ENCODE measurements at regions of chr1 and their contacts with region 1.

Region 1: DNA sequence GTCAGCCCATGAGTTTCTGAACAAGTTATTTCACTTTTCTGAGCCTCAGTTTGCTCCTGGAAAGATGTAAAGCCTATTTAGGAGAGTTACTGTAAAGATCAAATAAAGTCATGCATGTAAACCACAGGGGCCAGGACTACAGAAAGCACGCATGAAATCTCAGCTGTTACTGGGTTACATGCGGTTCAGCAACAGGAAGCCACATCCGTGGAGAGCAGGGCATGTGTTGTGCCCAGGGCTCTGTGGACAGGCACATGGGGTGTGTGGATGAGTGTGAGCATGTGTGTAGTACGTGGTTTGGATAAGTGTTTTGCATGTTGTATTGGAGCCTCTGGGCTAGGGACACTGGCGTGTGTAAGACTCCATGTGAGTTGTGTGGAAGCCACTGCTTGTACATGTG is 2.2 kb upstream of the EPHA2 start:
- DNase-seq: no peak
- H3K4me3 ChIP-seq: no peak overlapping the region
- H3K27ac ChIP-seq: no peak overlapping the region
- H3K4me1 ChIP-seq: peaks cover 0 to 35% (median 23%) of the 10 kb centered on the region in 4 donors
- H3K27me3 ChIP-seq: no peaks in the 10 kb centered on the region
- CTCF ChIP-seq: no peak

Region 2: DNA sequence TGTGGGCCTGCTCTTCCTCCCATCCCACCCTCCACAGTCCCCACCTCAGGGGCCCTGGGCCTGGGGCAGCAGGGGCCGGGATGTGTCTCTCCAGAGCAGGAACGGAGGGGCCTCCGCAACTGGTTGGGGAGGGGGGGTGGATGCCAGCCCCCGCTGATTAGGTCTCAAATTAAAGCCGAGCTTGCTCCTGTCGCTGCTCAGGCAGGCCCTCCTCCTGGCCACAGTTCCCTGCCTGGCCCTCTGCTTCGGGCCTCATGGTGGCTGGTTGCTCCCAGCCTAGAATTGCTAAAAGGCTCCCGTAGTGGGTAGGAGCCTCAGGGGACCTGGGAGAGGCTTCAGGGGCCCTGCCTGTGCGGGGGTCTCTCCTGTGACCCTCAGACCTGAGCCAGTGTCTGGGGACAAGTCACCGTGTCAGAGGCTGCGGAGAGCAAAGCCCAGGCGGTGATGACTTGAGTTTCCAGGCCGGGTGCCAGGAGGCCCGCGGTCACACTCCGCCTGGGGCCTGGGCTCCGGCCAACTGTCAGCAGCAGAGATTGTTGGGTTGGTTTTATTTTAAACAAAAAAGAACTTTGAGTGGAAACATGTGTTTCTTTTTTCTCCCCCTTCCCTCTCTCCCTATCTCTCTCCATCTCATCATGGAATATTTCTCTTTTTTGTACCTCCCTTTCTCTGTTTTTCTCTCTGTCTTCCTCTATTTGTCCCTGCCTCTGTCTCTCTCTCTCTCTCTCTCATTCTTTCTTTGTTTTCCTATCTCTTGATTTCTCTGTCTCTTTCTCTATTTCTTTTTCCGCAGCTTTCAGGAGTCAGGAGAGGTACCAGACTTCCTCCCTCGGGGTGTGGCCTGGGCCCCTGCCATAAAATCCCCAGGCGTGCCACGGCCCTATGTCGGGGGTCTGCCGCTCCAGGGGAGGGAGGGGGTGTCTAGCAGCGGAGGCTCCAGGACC is 17.9 kb after region 1 on chr1:
- intact Hi-C with region 1: loop called (anchors 2 kb)
- DNase-seq: peak; percentile 87 to 96
- H3K4me3 ChIP-seq: no peak overlapping the region
- H3K27ac ChIP-seq: peak overlapping the region; percentile 93 to 95
- H3K4me1 ChIP-seq: peaks cover 13 to 61% (median 39%) of the 10 kb centered on the region in 4 donors
- H3K27me3 ChIP-seq: no peaks in the 10 kb centered on the region
- CTCF ChIP-seq: no peak

Region 3: DNA sequence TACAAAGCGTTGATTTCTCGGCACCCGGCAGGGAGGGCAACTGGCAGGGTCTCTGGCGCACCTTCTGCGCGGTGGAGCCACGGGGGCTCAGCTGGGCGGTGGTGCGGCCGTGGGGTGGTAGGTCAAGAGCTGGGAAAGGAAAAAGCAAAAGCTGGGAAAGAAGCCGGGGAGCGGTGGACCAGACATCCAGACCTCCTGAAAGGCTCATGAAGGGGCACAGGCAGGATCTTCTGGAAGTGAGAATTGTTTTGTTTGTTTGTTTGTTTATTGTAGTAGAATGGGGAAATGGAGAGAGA is 363.2 kb after region 1 on chr1:
- intact Hi-C with region 1: no loop called
- DNase-seq: no peak
- H3K4me3 ChIP-seq: no peak overlapping the region
- H3K27ac ChIP-seq: no peak overlapping the region
- H3K4me1 ChIP-seq: no peaks in the 10 kb centered on the region
- H3K27me3 ChIP-seq: peaks cover 0 to 27% of the 10 kb centered on the region in 2 donors
- CTCF ChIP-seq: no peak